B cell (primary cell): ENCODE measurements at regions of chr5 and their contacts with region 1.

Region 1: DNA sequence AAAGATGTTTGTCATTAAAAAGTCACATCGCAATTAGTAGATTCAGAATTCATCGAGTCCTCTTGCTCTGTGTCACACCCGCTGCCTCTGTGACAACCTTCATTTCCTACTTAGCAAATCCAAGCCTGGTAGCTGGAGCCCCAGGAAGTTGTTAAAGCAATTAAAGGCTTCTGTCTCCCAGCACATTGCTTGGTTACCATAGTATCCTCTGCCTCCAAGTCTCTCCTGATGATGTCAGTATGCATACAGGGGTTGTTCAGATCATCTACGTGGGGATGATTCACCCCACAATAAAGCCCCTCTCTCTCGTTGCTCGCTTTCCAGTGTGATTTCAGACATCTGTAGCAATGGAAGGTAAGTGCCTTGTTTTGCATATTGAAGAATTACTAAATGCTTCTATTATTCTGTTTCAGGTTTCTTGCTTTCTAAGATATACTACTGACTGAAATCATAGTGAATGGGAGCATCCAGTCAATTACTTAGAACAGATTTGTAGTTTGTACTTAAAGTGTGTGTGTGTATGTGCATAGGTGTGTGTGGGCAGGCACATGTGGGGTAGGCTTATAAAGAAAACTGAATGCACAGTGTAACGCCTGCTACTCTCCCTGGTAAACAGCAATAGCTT is 52.9 kb downstream of the PAM start:
- DNase-seq: no peak
- ATAC-seq: no peak
- H3K4me3 ChIP-seq: no peak overlapping the region
- H3K4me3 Mint-ChIP-seq: no peak overlapping the region
- H3K27ac ChIP-seq: no peak overlapping the region
- H3K27ac Mint-ChIP-seq: no peak overlapping the region
- H3K4me1 ChIP-seq: no peaks in the 10 kb centered on the region
- H3K4me1 Mint-ChIP-seq: no peaks in the 10 kb centered on the region
- H3K27me3 ChIP-seq: no peaks in the 10 kb centered on the region
- H3K27me3 Mint-ChIP-seq: no peaks in the 10 kb centered on the region
- CTCF ChIP-seq: no peak

Region 2: GRCh38 chr5:102583276-102584124 is 224.5 kb before region 1 on chr5:
- CTCF ChIA-PET with region 1: no interaction called
- POLR2A ChIA-PET with region 1: no interaction called
- intact Hi-C with region 1: loop called (anchors 10 kb)
- DNase-seq: peak; percentile 18
- ATAC-seq: no peak
- H3K4me3 ChIP-seq: no peak overlapping the region
- H3K4me3 Mint-ChIP-seq: no peak overlapping the region
- H3K27ac ChIP-seq: no peak overlapping the region
- H3K27ac Mint-ChIP-seq: no peak overlapping the region
- H3K4me1 ChIP-seq: no peaks in the 10 kb centered on the region
- H3K4me1 Mint-ChIP-seq: no peaks in the 10 kb centered on the region
- H3K27me3 ChIP-seq: no peaks in the 10 kb centered on the region
- H3K27me3 Mint-ChIP-seq: peaks cover 3% of the 10 kb centered on the region
- CTCF ChIP-seq: peak; percentile 65

Region 3: GRCh38 chr5:103098993-103099392 is 291.0 kb after region 1 on chr5:
- CTCF ChIA-PET with region 1: no interaction called
- POLR2A ChIA-PET with region 1: no interaction called
- intact Hi-C with region 1: no loop called
- DNase-seq: no peak
- ATAC-seq: no peak
- H3K4me3 ChIP-seq: no peak overlapping the region
- H3K4me3 Mint-ChIP-seq: no peak overlapping the region
- H3K27ac ChIP-seq: no peak overlapping the region
- H3K27ac Mint-ChIP-seq: no peak overlapping the region
- H3K4me1 ChIP-seq: no peaks in the 10 kb centered on the region
- H3K4me1 Mint-ChIP-seq: no peaks in the 10 kb centered on the region
- H3K27me3 ChIP-seq: no peaks in the 10 kb centered on the region
- H3K27me3 Mint-ChIP-seq: no peaks in the 10 kb centered on the region
- CTCF ChIP-seq: no peak